ENCODE measurements at regions of chr4 and their contacts with region 1.

Region 1: GRCh38 chr4:183407128-183407585 is 37.3 kb upstream of the CDKN2AIP start:
- DNase-seq: peak; percentile 81 to 92
- H3K4me3 ChIP-seq: peak overlapping the region; percentile 49
- H3K4me3 Mint-ChIP-seq: peak overlapping the region; percentile 75
- H3K27ac Mint-ChIP-seq: peak overlapping the region; percentile 89
- H3K4me1 ChIP-seq: peaks cover 21% of the 10 kb centered on the region
- H3K4me1 Mint-ChIP-seq: peaks cover 29% of the 10 kb centered on the region
- H3K27me3 ChIP-seq: no peaks in the 10 kb centered on the region
- H3K27me3 Mint-ChIP-seq: no peaks in the 10 kb centered on the region
- CTCF ChIP-seq: peak; percentile 86 to 87

Region 2: GRCh38 chr4:181971411-181971810 is 1435.7 kb before region 1 on chr4:
- CTCF ChIA-PET with region 1: interaction called, 10 read pairs
- POLR2A ChIA-PET with region 1: no interaction called
- intact Hi-C with region 1: no loop called
- DNase-seq: no peak
- H3K4me3 ChIP-seq: no peak overlapping the region
- H3K4me3 Mint-ChIP-seq: no peak overlapping the region
- H3K27ac Mint-ChIP-seq: no peak overlapping the region
- H3K4me1 ChIP-seq: no peaks in the 10 kb centered on the region
- H3K4me1 Mint-ChIP-seq: no peaks in the 10 kb centered on the region
- H3K27me3 ChIP-seq: no peaks in the 10 kb centered on the region
- H3K27me3 Mint-ChIP-seq: peaks cover 13% of the 10 kb centered on the region
- CTCF ChIP-seq: no peak

Region 3: DNA sequence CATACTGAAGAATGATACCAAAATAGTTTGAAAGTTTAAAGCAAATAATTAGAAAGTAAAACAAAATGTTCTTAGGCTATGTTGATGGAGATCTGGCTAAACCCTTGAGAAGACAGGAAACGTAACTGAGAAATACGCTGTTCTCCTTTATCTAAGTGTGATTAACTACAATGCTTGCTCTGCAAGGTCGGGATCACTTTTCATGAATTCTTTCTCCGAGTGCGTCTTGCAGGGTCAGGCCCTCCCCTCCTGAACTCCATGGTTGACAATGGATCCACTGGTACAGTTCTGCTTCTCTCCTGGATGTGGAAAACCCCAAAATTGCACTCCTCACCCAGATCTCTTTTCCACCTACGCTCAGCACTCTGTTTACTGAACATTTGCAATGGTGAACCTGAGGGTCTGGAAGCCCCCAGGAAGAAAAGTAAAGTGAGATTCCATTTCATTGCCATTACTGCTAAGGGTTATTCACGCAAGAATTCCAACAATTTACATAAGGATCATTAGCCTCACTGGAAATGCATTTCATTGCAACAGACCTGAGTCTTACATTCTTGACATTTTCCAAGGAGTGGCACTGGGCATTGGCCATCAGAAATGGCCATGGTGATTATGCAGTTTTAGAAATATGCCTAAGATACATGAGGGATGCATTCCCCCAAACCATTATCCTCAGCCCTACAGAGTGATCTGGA is 332.7 kb before region 1 on chr4:
- CTCF ChIA-PET with region 1: no interaction called
- POLR2A ChIA-PET with region 1: no interaction called
- intact Hi-C with region 1: loop called (anchors 5 kb)
- DNase-seq: peak; percentile 37 to 52
- H3K4me3 ChIP-seq: no peak overlapping the region
- H3K4me3 Mint-ChIP-seq: peak overlapping the region; percentile 47
- H3K27ac Mint-ChIP-seq: peak overlapping the region; percentile 37
- H3K4me1 ChIP-seq: peaks cover 42% of the 10 kb centered on the region
- H3K4me1 Mint-ChIP-seq: peaks cover 42% of the 10 kb centered on the region
- H3K27me3 ChIP-seq: no peaks in the 10 kb centered on the region
- H3K27me3 Mint-ChIP-seq: no peaks in the 10 kb centered on the region
- CTCF ChIP-seq: no peak

Region 4: GRCh38 chr4:183312831-183313230 is 94.3 kb before region 1 on chr4:
- CTCF ChIA-PET with region 1: no interaction called
- POLR2A ChIA-PET with region 1: no interaction called
- intact Hi-C with region 1: loop called (anchors 5 kb)
- DNase-seq: no peak
- H3K4me3 ChIP-seq: no peak overlapping the region
- H3K4me3 Mint-ChIP-seq: peak overlapping the region; percentile 12
- H3K27ac Mint-ChIP-seq: peak overlapping the region; percentile 7
- H3K4me1 ChIP-seq: no peaks in the 10 kb centered on the region
- H3K4me1 Mint-ChIP-seq: peaks cover 7% of the 10 kb centered on the region
- H3K27me3 ChIP-seq: no peaks in the 10 kb centered on the region
- H3K27me3 Mint-ChIP-seq: no peaks in the 10 kb centered on the region
- CTCF ChIP-seq: no peak

Region 5: GRCh38 chr4:183362916-183363542 is 44.1 kb before region 1 on chr4:
- CTCF ChIA-PET with region 1: interaction called, 3 read pairs
- POLR2A ChIA-PET with region 1: no interaction called
- intact Hi-C with region 1: loop called (anchors 5 kb)
- DNase-seq: peak in 1 of 2 experiments; percentile 14
- H3K4me3 ChIP-seq: no peak overlapping the region
- H3K4me3 Mint-ChIP-seq: no peak overlapping the region
- H3K27ac Mint-ChIP-seq: no peak overlapping the region
- H3K4me1 ChIP-seq: peaks cover 6% of the 10 kb centered on the region; the same call in 1 of the 2 replicates
- H3K4me1 Mint-ChIP-seq: no peaks in the 10 kb centered on the region
- H3K27me3 ChIP-seq: no peaks in the 10 kb centered on the region
- H3K27me3 Mint-ChIP-seq: no peaks in the 10 kb centered on the region
- CTCF ChIP-seq: peak; percentile 26 to 36

Measured in Caco-2 (cell line).